ENCODE measurements at regions of chr20 and their contacts with region 1.

Region 1: GRCh38 chr20:15930311-15931305 is 642.6 kb downstream of the KIF16B start:
- DNase-seq: no peak
- ATAC-seq: peak; percentile 54
- H3K4me3 Mint-ChIP-seq: no peak overlapping the region
- H3K27ac Mint-ChIP-seq: peak overlapping the region; percentile 67
- H3K4me1 Mint-ChIP-seq: peaks cover 36% of the 10 kb centered on the region
- H3K27me3 Mint-ChIP-seq: no peaks in the 10 kb centered on the region
- CTCF ChIP-seq: no peak

Region 2: GRCh38 chr20:14337400-14338171 is 1593.0 kb before region 1 on chr20 and contains the start of gene FLRT3:
- CTCF ChIA-PET with region 1: no interaction called
- POLR2A ChIA-PET with region 1: no interaction called
- intact Hi-C with region 1: loop called (anchors 10 kb)
- DNase-seq: peak; percentile 17
- ATAC-seq: peak; percentile 79
- H3K4me3 Mint-ChIP-seq: peak within 1 kb of the TSS; percentile 50
- H3K27ac Mint-ChIP-seq: no peak within 1 kb of the TSS
- H3K4me1 Mint-ChIP-seq: peaks cover 5% of the 10 kb centered on the region
- H3K27me3 Mint-ChIP-seq: peaks cover 12% of the 10 kb centered on the region
- CTCF ChIP-seq: no peak
- total RNA-seq, gene FLRT3: not detected in 2 replicates

Region 3: DNA sequence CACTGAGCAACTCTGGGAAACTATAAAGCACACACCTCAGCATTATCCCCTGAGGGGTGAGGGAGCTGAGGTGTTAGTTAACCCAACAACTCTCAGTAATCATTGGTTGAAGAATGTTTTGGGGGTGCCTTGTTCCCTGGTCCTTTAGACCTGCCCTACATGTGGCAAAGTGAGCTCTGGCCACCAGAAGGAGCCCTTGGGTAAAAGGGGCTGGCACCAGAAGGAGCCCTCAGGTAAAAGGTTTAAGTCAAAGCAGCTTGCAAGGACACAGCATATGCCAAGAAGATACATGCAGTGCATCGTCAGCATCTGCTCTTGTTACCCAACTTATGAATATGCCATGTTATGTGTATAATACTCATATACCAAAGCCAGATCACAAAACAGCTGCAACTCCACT is 439.0 kb before region 1 on chr20:
- CTCF ChIA-PET with region 1: no interaction called
- POLR2A ChIA-PET with region 1: no interaction called
- intact Hi-C with region 1: loop called (anchors 1 kb)
- DNase-seq: no peak
- ATAC-seq: no peak
- H3K4me3 Mint-ChIP-seq: no peak overlapping the region
- H3K27ac Mint-ChIP-seq: no peak overlapping the region
- H3K4me1 Mint-ChIP-seq: no peaks in the 10 kb centered on the region
- H3K27me3 Mint-ChIP-seq: no peaks in the 10 kb centered on the region
- CTCF ChIP-seq: no peak

Region 4: GRCh38 chr20:15708984-15709598 is 221.5 kb before region 1 on chr20:
- CTCF ChIA-PET with region 1: interaction called, 49 read pairs
- POLR2A ChIA-PET with region 1: no interaction called
- intact Hi-C with region 1: loop called (anchors 1 kb)
- DNase-seq: peak; percentile 55
- ATAC-seq: peak; percentile 78
- H3K4me3 Mint-ChIP-seq: no peak overlapping the region
- H3K27ac Mint-ChIP-seq: no peak overlapping the region
- H3K4me1 Mint-ChIP-seq: peaks cover 4% of the 10 kb centered on the region
- H3K27me3 Mint-ChIP-seq: no peaks in the 10 kb centered on the region
- CTCF ChIP-seq: no peak

Region 5: DNA sequence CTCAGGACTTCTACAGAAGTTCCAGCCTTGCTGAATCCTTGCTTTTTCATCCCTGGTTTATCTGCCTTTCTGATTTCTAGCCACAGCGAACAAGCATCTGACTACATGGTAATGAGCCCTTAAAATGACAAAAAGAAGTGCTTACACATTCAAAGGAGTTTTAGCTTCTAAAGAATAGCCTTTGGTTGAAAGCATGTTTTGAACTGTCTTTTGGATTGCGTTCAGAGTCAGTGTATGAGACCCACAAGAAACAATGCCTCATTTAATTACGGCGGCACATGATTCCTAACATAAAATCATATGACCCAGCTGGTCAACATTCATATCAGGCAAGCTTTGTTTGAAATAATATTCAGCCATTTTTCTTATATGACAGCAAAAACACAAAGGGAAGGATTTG is 141.5 kb before region 1 on chr20:
- CTCF ChIA-PET with region 1: no interaction called
- POLR2A ChIA-PET with region 1: no interaction called
- intact Hi-C with region 1: no loop called
- DNase-seq: no peak
- ATAC-seq: no peak
- H3K4me3 Mint-ChIP-seq: no peak overlapping the region
- H3K27ac Mint-ChIP-seq: no peak overlapping the region
- H3K4me1 Mint-ChIP-seq: peaks cover 15% of the 10 kb centered on the region
- H3K27me3 Mint-ChIP-seq: no peaks in the 10 kb centered on the region
- CTCF ChIP-seq: no peak

Region 6: GRCh38 chr20:15842872-15843271 is 87.7 kb before region 1 on chr20:
- CTCF ChIA-PET with region 1: interaction called, 10 read pairs
- POLR2A ChIA-PET with region 1: no interaction called
- intact Hi-C with region 1: loop called (anchors 1 kb)
- DNase-seq: no peak
- ATAC-seq: peak; percentile 90
- H3K4me3 Mint-ChIP-seq: no peak overlapping the region
- H3K27ac Mint-ChIP-seq: peak overlapping the region; percentile 21
- H3K4me1 Mint-ChIP-seq: peaks cover 13% of the 10 kb centered on the region
- H3K27me3 Mint-ChIP-seq: no peaks in the 10 kb centered on the region
- CTCF ChIP-seq: no peak

Region 7: GRCh38 chr20:16241915-16242314 is 311.3 kb after region 1 on chr20:
- CTCF ChIA-PET with region 1: no interaction called
- POLR2A ChIA-PET with region 1: no interaction called
- intact Hi-C with region 1: loop called (anchors 5 kb)
- DNase-seq: no peak
- ATAC-seq: no peak
- H3K4me3 Mint-ChIP-seq: no peak overlapping the region
- H3K27ac Mint-ChIP-seq: no peak overlapping the region
- H3K4me1 Mint-ChIP-seq: peaks cover 9% of the 10 kb centered on the region
- H3K27me3 Mint-ChIP-seq: peaks cover 3% of the 10 kb centered on the region
- CTCF ChIP-seq: no peak

Measured in activated B cell treated with CpG ODN at 0.5 μM for 24 hours (primary cell).